ENCODE measurements at regions of chr7 and their contacts with region 1.

Region 1: GRCh38 chr7:33932832-33933468 is 27.6 kb downstream of the BMPER start:
- DNase-seq: peak; percentile 81
- ATAC-seq: peak; percentile 91 to 93

Region 2: DNA sequence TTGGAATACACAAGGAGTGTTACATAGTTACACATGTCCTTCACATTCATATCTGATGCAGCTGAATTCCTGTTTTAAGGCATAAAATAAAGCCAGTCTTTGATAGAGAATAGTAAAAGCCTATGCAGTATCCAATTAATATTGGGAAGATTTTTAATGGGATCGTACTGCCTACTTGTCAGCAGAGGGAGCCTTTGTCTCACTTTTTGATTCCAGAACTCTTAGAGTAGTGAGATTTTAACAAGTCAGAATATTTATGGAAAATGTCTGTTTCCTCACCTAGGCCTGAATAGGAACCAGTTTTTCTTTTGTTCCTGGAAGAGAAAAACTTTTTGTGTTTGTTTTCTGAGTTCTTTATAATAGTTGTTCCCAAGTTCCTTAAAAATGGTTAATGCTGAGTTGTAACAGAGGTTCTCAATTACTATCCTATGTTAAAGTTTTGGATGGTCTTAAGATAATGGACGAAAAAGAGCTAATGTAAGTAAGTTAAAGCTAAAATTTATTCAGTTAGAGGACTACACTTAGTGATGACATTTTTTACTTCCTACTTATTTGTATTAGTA is 689.5 kb before region 1 on chr7:
- intact Hi-C with region 1: loop called in 1 of 2 experiments (anchors 10 kb)
- DNase-seq: no peak
- ATAC-seq: peak in 1 of 2 donors; percentile 67

Measured in left cardiac atrium (tissue), 4 donors.